ENCODE measurements at regions of chr12 and their contacts with region 1.

Region 1: GRCh38 chr12:15393037-15393436 is 70.7 kb downstream of the PTPRO start:
- DNase-seq: no peak
- H3K4me3 ChIP-seq: no peak overlapping the region
- H3K27ac ChIP-seq: no peak overlapping the region
- H3K4me1 ChIP-seq: no peaks in the 10 kb centered on the region
- H3K27me3 ChIP-seq: no peaks in the 10 kb centered on the region
- CTCF ChIP-seq: no peak
- POLR2A ChIP-seq: no peak

Region 2: GRCh38 chr12:15320643-15321280 is 72.3 kb before region 1 on chr12:
- intact Hi-C with region 1: loop called (anchors 2 kb)
- DNase-seq: no peak
- H3K4me3 ChIP-seq: no peak overlapping the region
- H3K27ac ChIP-seq: no peak overlapping the region
- H3K4me1 ChIP-seq: peaks cover 13% of the 10 kb centered on the region
- H3K27me3 ChIP-seq: no peaks in the 10 kb centered on the region
- CTCF ChIP-seq: no peak
- POLR2A ChIP-seq: no peak

Region 3: GRCh38 chr12:15532364-15532977 is 139.4 kb after region 1 on chr12:
- intact Hi-C with region 1: no loop called
- DNase-seq: no peak
- H3K4me3 ChIP-seq: no peak overlapping the region
- H3K27ac ChIP-seq: no peak overlapping the region
- H3K4me1 ChIP-seq: no peaks in the 10 kb centered on the region
- H3K27me3 ChIP-seq: no peaks in the 10 kb centered on the region
- CTCF ChIP-seq: no peak
- POLR2A ChIP-seq: no peak

Region 4: GRCh38 chr12:15700595-15700994 is 307.6 kb after region 1 on chr12:
- intact Hi-C with region 1: no loop called
- DNase-seq: no peak
- H3K4me3 ChIP-seq: no peak overlapping the region
- H3K27ac ChIP-seq: peak overlapping the region; percentile 64
- H3K4me1 ChIP-seq: peaks cover 35% of the 10 kb centered on the region
- H3K27me3 ChIP-seq: no peaks in the 10 kb centered on the region
- CTCF ChIP-seq: no peak
- POLR2A ChIP-seq: no peak